GM13976 (cell line): ENCODE measurements at regions of chr11 and their contacts with region 1.

Region 1: DNA sequence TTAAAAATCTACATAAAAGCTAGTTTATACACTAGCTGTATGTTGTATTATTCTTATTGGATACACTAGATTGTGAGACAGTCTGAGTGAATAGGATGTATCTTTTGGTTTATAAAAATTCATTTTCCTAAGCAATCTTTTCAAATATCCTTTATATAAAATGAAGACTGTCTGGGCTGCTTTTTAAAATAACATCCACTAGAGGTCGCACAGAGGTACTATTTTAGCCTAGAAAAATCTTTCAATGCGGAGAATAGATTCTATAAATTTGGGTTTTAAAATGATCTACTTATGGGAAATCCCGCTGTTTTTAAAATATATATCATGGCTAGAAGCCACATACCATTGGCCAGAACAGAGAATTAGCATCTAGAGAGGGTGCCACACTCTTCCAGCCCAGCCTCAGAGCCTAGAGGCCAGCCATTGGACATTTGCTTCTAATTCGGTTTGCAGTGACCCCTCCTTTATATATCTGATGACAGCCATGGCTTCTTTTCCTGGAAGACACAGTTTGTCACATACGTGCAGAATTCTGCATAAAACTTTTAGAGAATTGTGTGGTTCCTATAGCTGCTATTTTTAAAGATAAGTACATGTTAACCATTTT is 7.3 kb downstream of the C11orf97 start:
- DNase-seq: peak; percentile 45
- CTCF ChIP-seq: peak; percentile 39

Region 2: GRCh38 chr11:94602430-94603372 is 83.1 kb after region 1 on chr11:
- in situ Hi-C with region 1: loop called (anchors 5 kb)
- DNase-seq: peak; percentile 44
- CTCF ChIP-seq: peak; percentile 57